ENCODE measurements at regions of chrX and their contacts with region 1.

Region 1: GRCh38 chrX:153460845-153461244 is 9.5 kb downstream of the HAUS7 start:
- DNase-seq: peak; percentile 59 to 62
- H3K4me3 ChIP-seq: no peak overlapping the region
- H3K4me3 Mint-ChIP-seq: no peak overlapping the region
- H3K27ac Mint-ChIP-seq: no peak overlapping the region
- H3K4me1 ChIP-seq: peaks cover 8% of the 10 kb centered on the region; the same call in 1 of the 2 replicates
- H3K4me1 Mint-ChIP-seq: no peaks in the 10 kb centered on the region
- H3K27me3 ChIP-seq: no peaks in the 10 kb centered on the region
- H3K27me3 Mint-ChIP-seq: no peaks in the 10 kb centered on the region
- CTCF ChIP-seq: peak; percentile 47 to 80

Region 2: DNA sequence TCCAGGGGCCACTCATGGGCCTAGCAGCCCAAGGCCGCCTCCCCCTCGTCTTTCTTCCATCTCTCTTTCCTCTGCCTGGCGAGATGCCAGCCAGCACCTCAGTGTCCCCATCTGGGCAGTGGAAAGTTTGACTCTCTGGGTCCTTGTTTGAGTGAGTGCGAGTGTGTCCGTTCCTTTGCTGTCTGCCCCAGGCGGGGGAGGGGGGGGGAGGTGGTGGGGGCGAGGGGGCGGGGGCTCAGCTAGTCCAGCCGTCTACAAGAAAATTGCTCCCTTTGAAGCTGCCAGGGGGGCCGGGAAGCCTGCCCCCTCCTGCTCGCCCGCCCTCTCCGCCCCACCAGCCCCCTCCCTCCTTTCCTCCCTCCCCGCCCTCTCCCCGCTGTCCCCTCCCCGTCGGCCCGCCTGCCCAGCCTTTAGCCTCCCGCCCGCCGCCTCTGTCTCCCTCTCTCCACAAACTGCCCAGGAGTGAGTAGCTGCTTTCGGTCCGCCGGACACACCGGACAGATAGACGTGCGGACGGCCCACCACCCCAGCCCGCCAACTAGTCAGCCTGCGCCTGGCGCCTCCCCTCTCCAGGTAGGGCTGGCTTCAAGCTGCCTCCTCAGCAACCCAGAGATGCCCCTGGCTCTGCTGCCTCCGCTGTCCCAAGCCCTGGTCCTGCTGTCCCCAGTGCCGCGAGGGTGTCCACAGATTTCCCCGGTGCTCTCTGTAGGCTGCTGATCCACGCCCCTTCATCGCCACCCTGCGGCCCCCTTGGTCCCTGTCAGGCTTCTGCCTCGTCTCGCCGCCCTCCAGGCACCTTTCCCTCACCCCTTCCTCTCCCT is 33.9 kb after region 1 on chrX and contains the start of gene BGN:
- CTCF ChIA-PET with region 1: interaction called, 11 read pairs
- POLR2A ChIA-PET with region 1: interaction called, 4 read pairs
- intact Hi-C with region 1: no loop called
- DNase-seq: peak; percentile 71 to 73
- H3K4me3 ChIP-seq: peak within 1 kb of the TSS; percentile 27
- H3K4me3 Mint-ChIP-seq: peak within 1 kb of the TSS; percentile 45
- H3K27ac Mint-ChIP-seq: peak within 1 kb of the TSS; percentile 27
- H3K4me1 ChIP-seq: peaks cover 9% of the 10 kb centered on the region
- H3K4me1 Mint-ChIP-seq: no peaks in the 10 kb centered on the region
- H3K27me3 ChIP-seq: no peaks in the 10 kb centered on the region
- H3K27me3 Mint-ChIP-seq: no peaks in the 10 kb centered on the region
- CTCF ChIP-seq: peak in 1 of 2 experiments; percentile 36
- total RNA-seq, gene BGN: 9.0 and 9.9 TPM in 2 replicates

Region 3: GRCh38 chrX:153507484-153508178 is 46.8 kb after region 1 on chrX:
- CTCF ChIA-PET with region 1: interaction called, 23 read pairs
- POLR2A ChIA-PET with region 1: no interaction called
- intact Hi-C with region 1: loop called (anchors 2 kb)
- DNase-seq: peak; percentile 65 to 82
- H3K4me3 ChIP-seq: no peak overlapping the region
- H3K4me3 Mint-ChIP-seq: no peak overlapping the region
- H3K27ac Mint-ChIP-seq: no peak overlapping the region
- H3K4me1 ChIP-seq: no peaks in the 10 kb centered on the region
- H3K4me1 Mint-ChIP-seq: no peaks in the 10 kb centered on the region
- H3K27me3 ChIP-seq: no peaks in the 10 kb centered on the region
- H3K27me3 Mint-ChIP-seq: peaks cover 3% of the 10 kb centered on the region
- CTCF ChIP-seq: peak; percentile 68 to 78

Measured in Caco-2 (cell line).